ENCODE measurements at regions of chr2 and their contacts with region 1.

Region 1: GRCh38 chr2:216139884-216140283 is 30.7 kb downstream of the XRCC5 start:
- DNase-seq: no peak
- H3K4me3 ChIP-seq: no peak overlapping the region
- H3K27ac ChIP-seq: no peak overlapping the region
- H3K27me3 ChIP-seq: no peaks in the 10 kb centered on the region
- CTCF ChIP-seq: no peak

Region 2: GRCh38 chr2:216108967-216109921 is 30.6 kb before region 1 on chr2 and contains the start of gene XRCC5:
- CTCF ChIA-PET with region 1: interaction called, 14 read pairs
- POLR2A ChIA-PET with region 1: no interaction called
- DNase-seq: peak; percentile 96
- H3K4me3 ChIP-seq: peak within 1 kb of the TSS; percentile 97
- H3K27ac ChIP-seq: peak within 1 kb of the TSS; percentile 89
- H3K27me3 ChIP-seq: no peaks in the 10 kb centered on the region
- CTCF ChIP-seq: no peak
- polyA plus RNA-seq, gene XRCC5: 427 and 471 TPM in 2 replicates

Region 3: DNA sequence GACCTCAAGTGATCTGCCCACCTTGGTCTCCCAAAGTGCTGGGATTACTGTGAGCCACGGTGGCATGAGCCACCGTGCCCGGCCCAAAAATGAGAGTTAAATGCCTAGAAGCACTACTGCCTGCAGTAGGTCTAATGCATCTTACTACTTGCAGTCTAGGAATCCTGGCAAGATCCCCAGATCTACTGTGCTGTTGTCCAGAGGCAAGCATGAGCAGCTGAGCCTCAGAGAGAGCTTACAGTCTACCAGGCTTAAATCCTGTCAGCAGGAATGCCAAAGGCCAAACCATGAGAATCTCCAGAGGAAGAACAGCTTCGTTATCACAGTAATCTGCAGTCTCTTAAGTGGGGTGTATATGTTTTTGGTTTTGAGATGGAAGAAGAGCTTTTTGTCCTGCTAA is 23.6 kb after region 1 on chr2:
- CTCF ChIA-PET with region 1: no interaction called
- POLR2A ChIA-PET with region 1: no interaction called
- DNase-seq: peak; percentile 18
- H3K4me3 ChIP-seq: no peak overlapping the region
- H3K27ac ChIP-seq: no peak overlapping the region
- H3K27me3 ChIP-seq: no peaks in the 10 kb centered on the region
- CTCF ChIP-seq: no peak

Region 4: DNA sequence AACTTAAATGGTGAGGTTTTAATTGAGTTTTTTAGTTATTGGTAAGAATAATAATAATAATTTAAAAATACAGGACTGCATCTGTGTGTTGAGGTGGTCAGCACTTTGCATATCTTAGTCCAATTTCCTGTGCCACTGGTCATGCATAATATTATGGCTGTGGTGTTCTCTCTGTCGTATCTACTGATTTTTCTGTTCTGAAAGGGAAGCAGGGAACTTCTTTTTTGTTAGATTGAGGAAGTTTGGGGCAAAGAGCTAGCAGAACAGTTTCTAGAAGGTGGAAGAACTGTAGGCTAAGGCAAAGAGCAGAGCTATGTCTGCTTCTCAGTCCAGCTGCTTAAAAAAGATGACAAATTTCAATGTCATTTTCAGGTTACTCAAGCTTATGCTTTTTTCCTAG is 43.6 kb after region 1 on chr2:
- CTCF ChIA-PET with region 1: no interaction called
- POLR2A ChIA-PET with region 1: no interaction called
- DNase-seq: no peak
- H3K4me3 ChIP-seq: no peak overlapping the region
- H3K27ac ChIP-seq: no peak overlapping the region
- H3K27me3 ChIP-seq: no peaks in the 10 kb centered on the region
- CTCF ChIP-seq: no peak

Region 5: GRCh38 chr2:216215658-216216390 is 75.9 kb after region 1 on chr2:
- CTCF ChIA-PET with region 1: no interaction called
- POLR2A ChIA-PET with region 1: no interaction called
- DNase-seq: no peak
- H3K4me3 ChIP-seq: no peak overlapping the region
- H3K27ac ChIP-seq: no peak overlapping the region
- H3K27me3 ChIP-seq: no peaks in the 10 kb centered on the region
- CTCF ChIP-seq: peak; percentile 61

Region 6: GRCh38 chr2:216242365-216242764 is 102.5 kb after region 1 on chr2:
- CTCF ChIA-PET with region 1: no interaction called
- POLR2A ChIA-PET with region 1: no interaction called
- DNase-seq: no peak
- H3K4me3 ChIP-seq: no peak overlapping the region
- H3K27ac ChIP-seq: no peak overlapping the region
- H3K27me3 ChIP-seq: no peaks in the 10 kb centered on the region
- CTCF ChIP-seq: no peak

Measured in AG04450 (cell line).